ENCODE measurements at regions of chr18 and their contacts with region 1.

Region 1: GRCh38 chr18:21612125-21612991 is at the start of gene SNRPD1:
- DNase-seq: peak; percentile 96
- H3K4me3 ChIP-seq: peak within 1 kb of the TSS; percentile 87
- H3K27ac ChIP-seq: peak within 1 kb of the TSS; percentile 92
- H3K4me1 ChIP-seq: peaks cover 20% of the 10 kb centered on the region
- CTCF ChIP-seq: peak; percentile 86
- total RNA-seq, gene SNRPD1: 133 and 191 TPM in 2 replicates

Region 2: GRCh38 chr18:21444465-21445023 is 167.8 kb before region 1 on chr18:
- CTCF ChIA-PET with region 1: no interaction called
- POLR2A ChIA-PET with region 1: no interaction called
- intact Hi-C with region 1: no loop called
- DNase-seq: peak; percentile 42
- H3K4me3 ChIP-seq: no peak overlapping the region
- H3K27ac ChIP-seq: no peak overlapping the region
- H3K4me1 ChIP-seq: no peaks in the 10 kb centered on the region
- CTCF ChIP-seq: peak; percentile 88

Region 3: GRCh38 chr18:21600526-21601410 is 11.6 kb before region 1 on chr18 and contains the start of gene ESCO1:
- CTCF ChIA-PET with region 1: interaction called, 17 read pairs
- POLR2A ChIA-PET with region 1: interaction called, 49 read pairs
- intact Hi-C with region 1: loop called (anchors 1 kb)
- DNase-seq: peak; percentile 98
- H3K4me3 ChIP-seq: peak within 1 kb of the TSS; percentile 87
- H3K27ac ChIP-seq: peak within 1 kb of the TSS; percentile 92
- H3K4me1 ChIP-seq: peaks cover 34% of the 10 kb centered on the region
- CTCF ChIP-seq: peak; percentile 75
- total RNA-seq, gene ESCO1: 22.1 and 25.3 TPM in 2 replicates

Region 4: DNA sequence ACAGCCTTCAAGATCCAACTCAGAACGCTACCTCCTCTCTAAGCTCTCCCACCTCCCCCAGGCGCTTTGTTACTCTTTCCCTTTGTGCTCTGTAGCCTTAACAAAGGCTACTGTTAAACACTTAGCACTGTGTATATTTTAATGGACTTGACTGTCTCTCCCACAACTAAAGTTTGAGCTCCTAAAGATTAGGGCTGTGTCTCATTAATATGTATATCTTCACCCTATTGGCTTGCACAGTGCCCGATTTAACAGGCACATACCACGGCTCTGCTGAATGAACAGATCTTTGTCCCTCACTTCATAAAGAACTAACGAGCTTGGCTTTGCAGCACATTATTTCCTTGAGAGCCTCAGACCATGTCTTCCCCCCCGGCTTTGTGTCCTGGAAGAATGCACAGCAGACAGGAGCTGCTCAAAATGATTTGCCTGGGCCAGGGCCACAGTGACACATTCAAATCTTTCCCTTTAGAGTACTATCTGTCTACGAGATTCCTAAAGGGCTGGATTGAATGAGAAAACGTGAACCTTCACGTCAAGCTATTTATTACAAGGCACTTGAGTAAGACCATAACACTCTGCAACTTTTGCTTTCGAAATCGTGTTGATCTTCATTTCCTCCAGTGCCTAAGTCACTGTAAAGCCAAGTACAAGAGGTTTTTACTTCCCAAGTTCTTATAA is 70.2 kb after region 1 on chr18:
- CTCF ChIA-PET with region 1: no interaction called
- POLR2A ChIA-PET with region 1: no interaction called
- intact Hi-C with region 1: loop called (anchors 5 kb)
- DNase-seq: peak; percentile 40
- H3K4me3 ChIP-seq: peak overlapping the region; percentile 25
- H3K27ac ChIP-seq: peak overlapping the region; percentile 21
- H3K4me1 ChIP-seq: peaks cover 49% of the 10 kb centered on the region
- CTCF ChIP-seq: no peak

Region 5: DNA sequence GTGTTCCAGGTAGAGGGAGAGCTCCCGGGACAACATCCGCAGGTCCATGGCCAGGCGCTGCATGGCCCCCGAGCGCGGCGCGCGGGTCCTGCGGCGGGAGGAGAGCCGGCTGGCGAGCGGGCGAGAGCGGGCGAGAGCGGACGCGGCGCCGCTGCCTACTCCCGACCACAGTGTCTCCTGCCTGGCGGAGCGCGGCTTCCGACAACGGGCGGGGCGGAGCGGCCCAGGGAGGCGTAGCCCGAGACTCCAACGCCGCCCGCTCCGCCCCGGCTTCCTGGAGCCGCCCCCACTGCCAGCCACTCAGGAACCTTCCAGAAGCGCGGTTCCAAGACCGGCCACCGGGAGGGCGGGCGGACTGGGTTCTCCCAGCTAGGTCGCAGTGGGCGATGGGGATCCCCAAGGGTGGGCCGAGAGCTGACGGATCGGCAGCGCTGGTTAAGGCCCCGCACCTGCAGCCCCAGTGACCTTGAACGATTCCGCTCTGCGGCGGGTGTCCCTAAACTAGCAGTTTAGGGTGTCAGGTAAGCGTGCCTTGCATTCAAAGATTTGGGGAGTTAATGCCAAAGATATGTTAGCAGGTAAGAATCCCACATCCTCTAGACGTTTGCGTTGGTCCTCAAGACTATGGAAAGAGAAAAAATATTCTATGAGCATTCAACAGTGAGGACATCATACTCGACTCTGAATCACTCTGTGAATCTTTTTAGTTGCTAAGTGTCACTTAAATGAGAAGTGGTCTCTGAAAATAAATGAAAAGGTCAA is 92.4 kb after region 1 on chr18 and contains the start of gene ABHD3:
- CTCF ChIA-PET with region 1: interaction called, 3 read pairs
- POLR2A ChIA-PET with region 1: interaction called, 3 read pairs
- intact Hi-C with region 1: loop called (anchors 1 kb)
- DNase-seq: peak; percentile 96
- H3K4me3 ChIP-seq: peak within 1 kb of the TSS; percentile 92
- H3K27ac ChIP-seq: peak within 1 kb of the TSS; percentile 95
- H3K4me1 ChIP-seq: peaks cover 44% of the 10 kb centered on the region
- CTCF ChIP-seq: peak; percentile 11; the same call in 1 of the 2 replicates
- total RNA-seq, gene ABHD3: 126 and 154 TPM in 2 replicates

Region 6: DNA sequence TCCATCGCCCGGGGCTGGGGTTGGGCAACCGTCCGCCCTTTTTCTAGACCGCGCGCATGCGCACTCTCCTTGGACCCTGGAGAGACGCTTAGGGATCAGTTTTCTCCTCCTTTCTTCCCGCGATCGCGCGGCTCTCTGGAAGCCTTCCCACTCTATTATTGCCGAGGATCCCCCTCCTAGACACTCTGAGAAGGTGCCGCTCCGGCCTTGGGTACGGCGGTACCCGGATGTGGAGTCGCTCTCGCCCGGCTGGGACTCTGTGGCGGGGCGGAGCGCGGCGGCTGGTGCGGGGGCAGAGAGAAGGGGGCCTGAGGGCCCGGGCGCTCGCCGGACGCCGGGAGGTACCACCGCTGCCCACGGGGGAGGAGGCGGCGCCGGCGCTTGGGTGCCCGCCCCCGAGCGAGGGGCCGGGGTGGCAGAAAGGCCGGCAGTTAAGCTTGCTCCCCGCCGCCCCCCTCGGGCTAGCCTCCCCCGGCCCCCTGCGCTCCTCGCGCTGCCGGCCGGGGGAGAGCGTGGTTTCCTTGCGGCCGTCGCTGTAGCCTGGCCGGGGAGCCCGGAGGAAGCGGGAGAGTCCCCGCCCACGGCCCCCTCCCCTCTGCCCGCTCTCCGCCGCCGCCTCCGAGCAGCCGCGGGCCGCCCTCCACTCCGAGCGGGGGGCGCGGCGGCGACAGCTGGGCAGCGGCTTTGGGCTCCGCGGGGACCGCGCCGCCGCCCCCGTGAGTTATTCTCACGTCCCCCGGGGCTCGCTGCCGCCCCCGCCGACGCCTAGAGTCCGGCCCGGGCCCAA is 128.6 kb after region 1 on chr18 and contains the start of gene MIB1:
- CTCF ChIA-PET with region 1: no interaction called
- POLR2A ChIA-PET with region 1: interaction called, 4 read pairs
- intact Hi-C with region 1: loop called (anchors 1 kb)
- DNase-seq: peak; percentile 82
- H3K4me3 ChIP-seq: peak within 1 kb of the TSS; percentile 95
- H3K27ac ChIP-seq: peak within 1 kb of the TSS; percentile 80
- H3K4me1 ChIP-seq: peaks cover 38% of the 10 kb centered on the region
- CTCF ChIP-seq: no peak
- total RNA-seq, gene MIB1: 40.5 and 51.6 TPM in 2 replicates

Region 7: GRCh38 chr18:21851327-21851972 is 239.1 kb after region 1 on chr18:
- CTCF ChIA-PET with region 1: no interaction called
- POLR2A ChIA-PET with region 1: no interaction called
- intact Hi-C with region 1: loop called (anchors 10 kb)
- DNase-seq: peak; percentile 32
- H3K4me3 ChIP-seq: no peak overlapping the region
- H3K27ac ChIP-seq: no peak overlapping the region
- H3K4me1 ChIP-seq: peaks cover 28% of the 10 kb centered on the region
- CTCF ChIP-seq: peak; percentile 77

Measured in OCI-LY7 (cell line).